Left ventricle myocardium inferior (tissue), 1 donor: ENCODE measurements at regions of chr11 and their contacts with region 1.

Region 1: GRCh38 chr11:87081358-87081757 is 43.6 kb downstream of the TMEM135 start:
- DNase-seq: no peak
- H3K4me3 ChIP-seq: peak overlapping the region; percentile 35
- H3K27ac ChIP-seq: no peak overlapping the region
- H3K4me1 ChIP-seq: peaks cover 6% of the 10 kb centered on the region
- H3K27me3 ChIP-seq: no peaks in the 10 kb centered on the region
- CTCF ChIP-seq: no peak

Region 2: GRCh38 chr11:87275176-87275575 is 193.8 kb after region 1 on chr11:
- intact Hi-C with region 1: loop called (anchors 10 kb)
- DNase-seq: no peak
- H3K4me3 ChIP-seq: no peak overlapping the region
- H3K27ac ChIP-seq: no peak overlapping the region
- H3K4me1 ChIP-seq: peaks cover 10% of the 10 kb centered on the region
- H3K27me3 ChIP-seq: no peaks in the 10 kb centered on the region
- CTCF ChIP-seq: no peak